ENCODE measurements at regions of chr7 and their contacts with region 1.

Region 1: GRCh38 chr7:44885394-44886317 is at the start of gene PURB:
- DNase-seq: peak; percentile 96 to 99 (median 98)
- H3K4me3 ChIP-seq: peak within 1 kb of the TSS; percentile 98
- H3K4me3 Mint-ChIP-seq: peak within 1 kb of the TSS; percentile 85 to 98 (median 95)
- H3K27ac ChIP-seq: peak within 1 kb of the TSS; percentile 96
- H3K27ac Mint-ChIP-seq: peak within 1 kb of the TSS; percentile 97 to 100 (median 100)
- H3K4me1 ChIP-seq: peaks cover 43% of the 10 kb centered on the region
- H3K4me1 Mint-ChIP-seq: peaks cover 48 to 71% (median 68%) of the 10 kb centered on the region in 3 donors
- H3K27me3 ChIP-seq: no peaks in the 10 kb centered on the region
- H3K27me3 Mint-ChIP-seq: peaks cover 0 to 7% of the 10 kb centered on the region in 2 donors
- total RNA-seq, gene PURB: 45.0 to 45.1 TPM

Region 2: DNA sequence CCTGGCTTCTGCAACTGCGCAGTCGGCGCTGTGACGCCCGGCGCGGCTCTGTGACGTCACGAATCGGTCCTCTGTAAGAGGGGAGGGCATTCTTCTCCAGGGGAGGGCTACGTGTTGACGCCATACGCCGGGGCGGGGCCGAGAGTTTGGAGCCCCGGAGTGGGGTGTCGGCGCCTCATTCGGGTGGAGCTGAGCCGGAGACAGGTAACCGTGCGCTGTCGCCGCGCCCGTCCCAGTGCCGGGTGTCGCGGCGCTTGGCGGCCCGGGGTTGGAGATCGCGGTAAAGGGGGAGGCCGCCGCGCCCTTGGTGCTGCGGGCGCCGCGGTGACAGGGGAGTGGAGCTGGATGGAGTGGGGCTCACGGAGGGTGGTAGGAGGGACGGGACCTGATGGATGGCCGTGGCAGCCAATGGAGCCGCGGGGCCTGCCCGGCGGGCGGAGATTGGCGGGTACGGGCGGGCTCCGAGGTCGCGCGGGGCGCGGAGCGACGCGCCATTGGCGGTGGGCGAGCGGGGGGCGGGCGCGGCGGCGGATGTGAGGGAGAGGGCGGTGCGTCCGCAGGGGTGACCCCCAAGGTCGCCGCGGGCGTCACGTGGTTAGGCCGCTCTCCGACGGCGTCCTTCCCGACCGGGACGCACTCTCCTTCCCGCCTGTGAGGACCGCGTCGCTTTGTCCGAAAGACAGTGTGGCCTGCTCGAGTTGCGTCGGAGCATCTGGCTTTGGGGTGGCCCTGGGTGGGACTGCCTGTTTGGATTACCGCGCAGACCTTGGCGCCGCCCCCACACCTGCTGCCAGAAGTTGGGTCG is 279.0 kb before region 1 on chr7 and contains the start of gene OGDH:
- CTCF ChIA-PET with region 1: no interaction called
- POLR2A ChIA-PET with region 1: interaction called, 20 read pairs
- DNase-seq: peak; percentile 98 to 100 (median 99)
- H3K4me3 ChIP-seq: peak within 1 kb of the TSS; percentile 75
- H3K4me3 Mint-ChIP-seq: peak within 1 kb of the TSS; percentile 93 to 99 (median 97)
- H3K27ac ChIP-seq: peak within 1 kb of the TSS; percentile 97
- H3K27ac Mint-ChIP-seq: peak within 1 kb of the TSS; percentile 97 to 100 (median 99)
- H3K4me1 ChIP-seq: peaks cover 23% of the 10 kb centered on the region
- H3K4me1 Mint-ChIP-seq: peaks cover 38 to 56% (median 45%) of the 10 kb centered on the region in 3 donors
- H3K27me3 ChIP-seq: no peaks in the 10 kb centered on the region
- H3K27me3 Mint-ChIP-seq: peaks cover 0 to 5% of the 10 kb centered on the region in 2 donors
- total RNA-seq, gene OGDH: 92.8 to 93.8 TPM

Region 3: GRCh38 chr7:44811086-44811485 is 74.6 kb before region 1 on chr7:
- CTCF ChIA-PET with region 1: no interaction called
- POLR2A ChIA-PET with region 1: no interaction called
- DNase-seq: no peak
- H3K4me3 ChIP-seq: no peak overlapping the region
- H3K4me3 Mint-ChIP-seq: no peak overlapping the region
- H3K27ac ChIP-seq: no peak overlapping the region
- H3K27ac Mint-ChIP-seq: no peak overlapping the region
- H3K4me1 ChIP-seq: no peaks in the 10 kb centered on the region
- H3K4me1 Mint-ChIP-seq: no peaks in the 10 kb centered on the region
- H3K27me3 ChIP-seq: no peaks in the 10 kb centered on the region
- H3K27me3 Mint-ChIP-seq: no peaks in the 10 kb centered on the region

Region 4: GRCh38 chr7:44858161-44858560 is 27.5 kb before region 1 on chr7:
- CTCF ChIA-PET with region 1: interaction called, 25 read pairs
- POLR2A ChIA-PET with region 1: interaction called, 4 read pairs
- DNase-seq: no peak
- H3K4me3 ChIP-seq: no peak overlapping the region
- H3K4me3 Mint-ChIP-seq: no peak overlapping the region
- H3K27ac ChIP-seq: no peak overlapping the region
- H3K27ac Mint-ChIP-seq: no peak overlapping the region
- H3K4me1 ChIP-seq: no peaks in the 10 kb centered on the region
- H3K4me1 Mint-ChIP-seq: peaks cover 3 to 6% (median 5%) of the 10 kb centered on the region in 3 donors
- H3K27me3 ChIP-seq: no peaks in the 10 kb centered on the region
- H3K27me3 Mint-ChIP-seq: peaks cover 0 to 12% of the 10 kb centered on the region in 2 donors

Region 5: DNA sequence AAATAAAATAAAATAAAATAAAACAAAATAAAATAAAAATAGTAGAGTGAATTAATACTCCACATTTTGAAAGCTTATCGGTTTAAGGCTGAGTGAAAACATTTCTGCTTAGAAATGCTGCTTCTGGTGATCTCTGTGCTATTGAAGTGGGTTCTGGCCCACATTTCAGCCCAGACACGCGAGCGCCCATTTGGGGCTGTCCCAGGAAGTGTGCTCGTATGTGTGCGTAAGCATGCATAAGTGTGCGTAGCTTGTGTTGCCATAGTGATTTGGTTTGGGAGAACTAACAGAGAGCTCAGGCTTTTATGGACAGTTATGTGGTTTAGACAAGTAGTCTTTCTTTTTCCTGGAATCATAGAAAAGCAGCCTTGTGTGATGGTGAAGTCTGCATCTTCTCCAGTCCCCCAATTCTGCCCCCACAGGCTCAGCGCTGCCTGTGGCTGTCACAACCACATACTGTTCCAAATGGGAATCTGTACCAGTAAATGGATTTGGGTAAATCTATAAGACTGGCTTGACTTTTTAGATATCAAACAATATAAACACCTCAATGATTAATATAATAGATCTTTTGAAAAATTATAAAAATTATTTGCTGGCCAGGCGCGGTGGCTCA is 29.4 kb after region 1 on chr7:
- CTCF ChIA-PET with region 1: interaction called, 5 read pairs
- POLR2A ChIA-PET with region 1: interaction called, 10 read pairs
- DNase-seq: peak in 4 of 5 donors; percentile 30 to 90 (median 78)
- H3K4me3 ChIP-seq: no peak overlapping the region
- H3K4me3 Mint-ChIP-seq: peak overlapping the region in 1 of 7 donors; percentile 22
- H3K27ac ChIP-seq: peak overlapping the region; percentile 35
- H3K27ac Mint-ChIP-seq: peak overlapping the region in 6 of 8 donors; percentile 70 to 96 (median 87)
- H3K4me1 ChIP-seq: peaks cover 7% of the 10 kb centered on the region
- H3K4me1 Mint-ChIP-seq: peaks cover 3 to 17% (median 4%) of the 10 kb centered on the region in 3 donors
- H3K27me3 ChIP-seq: no peaks in the 10 kb centered on the region
- H3K27me3 Mint-ChIP-seq: no peaks in the 10 kb centered on the region

Region 6: DNA sequence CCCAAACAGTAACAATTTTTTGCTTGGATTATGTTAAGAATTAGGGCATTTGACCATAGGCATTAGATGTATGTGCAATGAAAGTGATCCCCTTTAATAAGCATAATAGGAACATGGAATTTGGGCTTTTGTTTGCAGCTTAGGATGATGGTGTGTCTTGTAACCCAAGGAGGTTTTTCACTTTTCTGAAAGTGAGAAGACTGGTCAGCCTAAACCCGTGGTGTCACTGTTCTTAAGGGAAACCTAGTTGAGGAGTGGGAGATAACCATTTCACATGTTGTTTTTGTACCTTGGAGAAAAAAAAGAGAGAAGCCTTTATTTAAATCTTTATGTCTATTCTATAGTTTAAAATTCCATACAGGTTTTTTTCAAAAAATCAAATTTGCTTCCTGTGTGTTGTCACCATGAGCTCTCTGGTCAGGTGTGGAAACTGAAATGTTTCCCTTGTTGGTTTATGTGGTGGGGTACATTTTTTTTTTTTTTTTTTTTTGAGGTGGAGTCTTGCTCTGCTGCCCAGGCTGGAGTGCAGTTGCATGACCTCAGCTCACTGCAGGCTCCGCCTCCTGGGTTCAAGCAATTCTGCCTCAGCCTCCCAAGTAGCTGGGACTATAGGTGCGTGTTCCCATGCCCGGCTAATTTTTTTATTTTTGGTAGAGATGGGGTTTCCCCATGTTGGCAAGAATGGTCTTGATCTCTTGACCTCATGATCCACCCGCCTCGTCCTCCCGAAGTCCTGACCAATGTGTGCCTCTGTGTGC is 122.1 kb after region 1 on chr7:
- CTCF ChIA-PET with region 1: no interaction called
- POLR2A ChIA-PET with region 1: no interaction called
- DNase-seq: no peak
- H3K4me3 ChIP-seq: no peak overlapping the region
- H3K4me3 Mint-ChIP-seq: peak overlapping the region in 4 of 7 donors; percentile 15 to 59 (median 20)
- H3K27ac ChIP-seq: no peak overlapping the region
- H3K27ac Mint-ChIP-seq: peak overlapping the region; percentile 7 to 83 (median 74)
- H3K4me1 ChIP-seq: peaks cover 16% of the 10 kb centered on the region
- H3K4me1 Mint-ChIP-seq: peaks cover 41 to 64% (median 47%) of the 10 kb centered on the region in 3 donors
- H3K27me3 ChIP-seq: no peaks in the 10 kb centered on the region
- H3K27me3 Mint-ChIP-seq: no peaks in the 10 kb centered on the region

Region 7: DNA sequence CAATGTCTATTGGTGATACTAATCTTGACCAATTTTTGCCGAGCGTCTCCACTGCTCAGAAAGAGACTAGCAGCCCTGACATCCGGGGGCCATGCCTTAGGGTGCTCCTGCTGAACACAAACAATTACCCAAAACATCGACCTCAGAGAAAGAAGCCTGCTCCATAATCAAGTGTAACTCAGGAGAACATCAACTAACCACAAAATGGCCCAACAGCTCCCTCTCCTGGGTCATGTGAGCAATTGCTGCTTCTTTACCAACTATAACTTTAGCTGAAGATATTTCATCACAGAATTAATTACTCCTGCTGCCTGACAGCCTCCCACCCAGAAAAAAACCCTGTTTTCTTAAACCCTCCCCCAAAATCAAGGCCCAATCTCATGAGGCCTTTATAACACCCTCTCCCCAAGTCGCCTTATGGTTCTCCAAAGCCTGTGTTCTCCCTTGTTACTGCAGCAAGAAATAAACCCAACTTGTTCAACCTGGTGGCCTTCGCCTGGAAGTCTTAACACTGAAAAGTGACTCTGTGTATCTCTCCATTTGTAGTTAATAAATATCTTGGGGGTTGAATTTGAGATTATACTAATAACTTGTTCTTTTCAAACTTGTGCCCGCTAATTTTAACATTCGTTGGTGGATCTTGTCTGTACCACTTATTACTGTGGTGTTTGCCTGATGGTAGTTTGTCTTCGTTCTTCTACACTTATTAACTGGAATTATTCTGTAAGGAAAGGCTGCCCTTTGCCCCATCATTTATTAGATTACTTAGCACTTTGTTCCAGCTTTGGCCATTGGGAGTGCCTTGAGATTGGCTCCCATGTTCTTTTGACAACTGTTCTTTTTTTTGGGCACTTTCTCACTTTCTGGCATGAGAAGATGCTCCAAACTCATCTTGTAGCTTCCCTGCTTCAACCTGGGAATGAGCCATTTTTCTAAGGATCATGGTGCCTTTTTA is 250.7 kb after region 1 on chr7:
- CTCF ChIA-PET with region 1: interaction called, 12 read pairs
- POLR2A ChIA-PET with region 1: no interaction called
- DNase-seq: peak; percentile 35 to 74 (median 59)
- H3K4me3 ChIP-seq: no peak overlapping the region
- H3K4me3 Mint-ChIP-seq: peak overlapping the region in 1 of 7 donors; percentile 17
- H3K27ac ChIP-seq: no peak overlapping the region
- H3K27ac Mint-ChIP-seq: peak overlapping the region in 5 of 8 donors; percentile 13 to 70 (median 33)
- H3K4me1 ChIP-seq: peaks cover 6% of the 10 kb centered on the region
- H3K4me1 Mint-ChIP-seq: peaks cover 3 to 9% (median 4%) of the 10 kb centered on the region in 3 donors
- H3K27me3 ChIP-seq: no peaks in the 10 kb centered on the region
- H3K27me3 Mint-ChIP-seq: no peaks in the 10 kb centered on the region